ENCODE measurements at regions of chr1 and their contacts with region 1.

Region 1: DNA sequence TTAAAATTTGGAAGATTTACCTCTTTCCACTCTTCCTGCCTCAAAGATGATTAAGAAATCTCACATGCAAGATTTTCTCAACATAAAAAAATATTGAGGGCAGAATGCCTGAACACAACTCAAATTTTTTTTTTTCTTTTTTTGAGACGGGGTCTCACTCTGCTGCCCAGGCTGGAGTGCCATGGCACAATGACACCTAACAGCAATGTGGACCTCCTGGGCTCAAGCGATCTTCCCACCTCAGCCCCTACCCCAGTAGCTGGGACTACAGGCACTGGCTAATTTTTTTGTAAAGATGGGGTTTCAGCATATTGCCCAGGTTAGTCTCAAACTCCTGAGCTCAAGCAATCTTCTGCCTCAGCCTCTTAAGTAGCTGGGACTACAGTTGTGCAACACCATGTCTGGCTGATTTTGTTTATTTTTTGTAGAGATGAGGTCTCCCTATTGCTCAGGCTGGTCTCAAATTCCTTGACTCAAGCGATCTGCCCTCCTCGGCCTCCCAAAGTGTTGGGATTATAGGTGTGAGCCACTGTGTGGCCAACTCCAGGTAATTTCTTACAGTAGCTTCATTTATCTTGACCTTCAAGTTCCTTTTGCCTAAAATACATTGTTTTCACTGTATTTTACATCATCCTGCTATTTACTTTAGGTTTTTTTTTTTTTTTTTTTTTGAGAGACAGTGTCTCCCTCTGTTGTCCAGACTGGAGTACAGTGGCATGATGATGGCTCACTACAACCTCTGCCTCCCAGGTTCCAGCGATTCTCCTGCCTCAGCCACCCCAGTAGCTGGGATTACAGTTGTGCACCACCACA is 10.4 kb downstream of the NUCKS1 start:
- DNase-seq: peak in 1 of 2 experiments; percentile 53
- ATAC-seq: peak; percentile 55 to 69; a peak in 5 of 6 replicates
- H3K4me3 ChIP-seq: no peak overlapping the region
- H3K27ac ChIP-seq: 0 out of 6 replicates have a peak overlapping the region, but pooled peaks of 1 of the 2 experiments have one; percentile 10
- H3K4me1 ChIP-seq: peaks cover 39% of the 10 kb centered on the region
- CTCF ChIP-seq: peak; percentile 17; the same call in 1 of the 3 replicates
- EP300 ChIP-seq: no peak
- POLR2A ChIP-seq: no peak
- RAD21 ChIP-seq: no peak

Region 2: GRCh38 chr1:205750138-205751035 is 10.8 kb after region 1 on chr1 and contains the start of gene NUCKS1:
- CTCF ChIA-PET with region 1: no interaction called
- POLR2A ChIA-PET with region 1: interaction called, 11 read pairs
- DNase-seq: peak; percentile 86 to 100
- ATAC-seq: peak; percentile 86
- H3K4me3 ChIP-seq: peak within 1 kb of the TSS; percentile 99
- H3K27ac ChIP-seq: peak within 1 kb of the TSS; percentile 99 to 100
- H3K4me1 ChIP-seq: peaks cover 28% of the 10 kb centered on the region
- CTCF ChIP-seq: no peak
- EP300 ChIP-seq: no peak
- POLR2A ChIP-seq: no peak
- RAD21 ChIP-seq: no peak
- polyA plus RNA-seq, gene NUCKS1: 134 and 190 TPM in 2 replicates

Measured in A549 (cell line).